GM10248 (cell line): ENCODE measurements at regions of chr21 and their contacts with region 1.

Region 1: DNA sequence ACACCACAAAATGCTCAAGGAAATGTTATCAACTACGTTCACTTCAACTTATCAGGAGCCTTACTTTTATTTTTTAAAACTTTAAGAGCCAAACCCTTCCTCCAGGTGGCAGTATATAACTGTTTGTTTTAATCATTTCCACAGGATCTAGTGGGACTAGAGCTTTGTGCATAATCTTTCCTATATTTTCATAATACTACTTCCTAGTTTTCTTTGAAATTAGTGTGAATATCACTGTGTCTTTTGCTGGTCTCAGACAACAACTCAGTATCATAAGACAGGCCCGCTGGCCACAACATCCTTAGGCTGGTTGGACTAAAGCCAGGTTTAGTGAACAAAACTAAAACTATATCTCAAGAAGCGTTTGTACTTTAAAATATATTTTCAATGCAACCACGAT is 145.5 kb downstream of the TIAM1 start:
- DNase-seq: peak; percentile 38
- CTCF ChIP-seq: peak; percentile 43

Region 2: GRCh38 chr21:31185663-31186062 is 12.9 kb before region 1 on chr21:
- CTCF ChIA-PET with region 1: interaction called, 8 read pairs
- POLR2A ChIA-PET with region 1: interaction called, 15 read pairs
- DNase-seq: no peak
- CTCF ChIP-seq: no peak

Region 3: DNA sequence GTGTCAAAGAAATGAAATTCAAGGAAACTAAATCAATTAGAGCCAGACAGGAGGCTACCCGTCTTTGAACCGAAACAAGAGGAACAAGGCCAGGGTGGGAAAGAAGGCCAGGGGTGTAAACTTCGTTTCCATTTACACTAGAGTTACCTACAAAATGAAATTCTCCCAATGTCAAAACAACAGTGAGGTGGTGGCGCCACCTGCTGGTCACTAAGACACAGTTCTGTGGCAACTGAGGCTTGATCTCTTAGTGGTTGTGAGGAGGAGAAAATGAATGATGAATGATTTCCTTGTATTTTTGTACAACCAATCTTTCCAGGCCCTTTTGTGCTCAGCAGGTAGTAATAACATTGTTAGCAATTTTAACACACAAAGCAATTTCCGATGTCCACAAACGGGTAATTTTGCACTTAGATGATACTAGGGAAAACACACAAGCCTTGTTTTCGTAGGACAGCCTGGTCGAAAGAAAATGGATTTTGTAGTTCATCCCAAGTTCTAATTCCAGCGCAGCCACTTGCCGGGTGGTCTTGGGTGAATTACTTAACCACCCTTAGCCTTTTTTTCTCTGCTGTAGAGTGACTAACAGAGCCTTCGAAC is 406.1 kb after region 1 on chr21:
- CTCF ChIA-PET with region 1: interaction called, 13 read pairs
- POLR2A ChIA-PET with region 1: no interaction called
- DNase-seq: peak; percentile 70
- CTCF ChIP-seq: peak; percentile 87

Region 4: DNA sequence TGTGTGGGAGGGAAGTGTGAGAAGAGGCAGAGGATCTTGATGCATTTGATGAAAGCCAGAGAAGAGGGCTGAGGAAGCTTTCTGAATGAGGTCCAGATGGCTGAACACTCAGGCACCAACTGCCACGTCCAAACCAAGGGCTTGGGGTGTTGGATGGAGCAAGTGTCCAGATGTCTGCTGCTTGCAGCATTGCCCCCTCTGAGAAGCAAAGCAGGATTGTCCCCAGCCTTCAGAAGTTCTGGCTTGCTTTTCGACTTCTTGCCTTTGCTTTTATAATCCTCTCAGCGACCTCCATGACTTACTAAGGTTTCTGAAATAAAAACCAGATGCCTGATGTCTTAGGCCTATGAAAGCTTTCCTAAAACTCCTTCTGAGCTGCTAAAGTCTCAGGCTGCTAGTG is 856.7 kb after region 1 on chr21:
- CTCF ChIA-PET with region 1: no interaction called
- POLR2A ChIA-PET with region 1: no interaction called
- DNase-seq: no peak
- CTCF ChIP-seq: no peak